Heart right ventricle (tissue), 16 donors: ENCODE measurements at regions of chr7 and their contacts with region 1.

Region 1: GRCh38 chr7:106583101-106583500 is 77.9 kb downstream of the CCDC71L start:
- DNase-seq: no peak
- ATAC-seq: no peak
- H3K4me3 ChIP-seq: no peak overlapping the region
- H3K27ac ChIP-seq: no peak overlapping the region
- H3K4me1 ChIP-seq: no peaks in the 10 kb centered on the region
- H3K27me3 ChIP-seq: no peaks in the 10 kb centered on the region
- CTCF ChIP-seq: no peak

Region 2: GRCh38 chr7:107130487-107131225 is 547.6 kb after region 1 on chr7:
- intact Hi-C with region 1: loop called in 1 of 10 experiments (anchors 2 kb)
- DNase-seq: no peak
- ATAC-seq: no peak
- H3K4me3 ChIP-seq: no peak overlapping the region
- H3K27ac ChIP-seq: no peak overlapping the region
- H3K4me1 ChIP-seq: no peaks in the 10 kb centered on the region
- H3K27me3 ChIP-seq: no peaks in the 10 kb centered on the region
- CTCF ChIP-seq: no peak